ENCODE measurements at regions of chr14 and their contacts with region 1.

Region 1: DNA sequence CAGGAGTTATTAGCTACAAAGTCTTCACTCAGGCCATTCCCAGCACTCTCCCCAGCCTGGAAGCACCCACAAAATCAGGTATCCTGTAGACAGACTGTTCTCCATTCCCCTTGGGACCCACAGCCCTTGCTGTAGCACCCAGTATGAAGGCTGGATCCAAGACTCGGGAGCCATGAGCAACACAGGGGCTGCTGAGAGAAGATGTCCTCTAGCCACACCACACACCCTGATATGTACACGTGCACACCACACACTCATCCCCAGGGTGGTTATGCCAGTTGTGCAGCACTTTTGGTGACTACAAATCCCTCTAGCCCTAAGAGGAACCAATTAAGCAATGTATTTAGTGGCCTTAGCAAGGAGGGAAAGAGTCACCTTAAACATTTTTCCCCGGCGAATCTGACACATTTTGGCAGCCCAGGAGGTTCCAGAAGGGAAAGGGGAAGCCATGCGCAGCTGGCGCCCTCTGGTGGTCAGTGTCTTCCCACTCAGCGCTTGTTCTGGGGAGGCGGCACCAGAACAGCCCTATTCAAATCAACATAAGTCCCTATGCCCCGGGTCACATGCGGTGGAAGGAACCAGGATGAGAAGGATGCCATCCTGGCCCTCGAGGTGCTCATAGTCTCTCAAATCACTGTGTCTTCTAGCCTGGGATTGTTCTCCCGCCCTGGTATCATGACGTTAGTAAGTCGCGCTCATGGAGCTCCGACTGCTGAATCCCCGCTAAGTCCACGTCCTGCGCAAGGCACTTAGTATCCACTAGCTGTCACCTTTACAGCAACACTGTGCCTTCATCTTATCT is 96.9 kb downstream of the GCH1 start:
- DNase-seq: peak; percentile 66 to 81
- H3K4me3 ChIP-seq: no peak overlapping the region; the same call in 1 of the 2 replicates
- H3K27ac ChIP-seq: no peak overlapping the region
- H3K4me1 ChIP-seq: 0 out of 2 replicates have a peak, but pooled peaks cover 4% of the 10 kb centered on the region
- H3K27me3 ChIP-seq: no peaks in the 10 kb centered on the region
- CTCF ChIP-seq: peak; percentile 91

Region 2: DNA sequence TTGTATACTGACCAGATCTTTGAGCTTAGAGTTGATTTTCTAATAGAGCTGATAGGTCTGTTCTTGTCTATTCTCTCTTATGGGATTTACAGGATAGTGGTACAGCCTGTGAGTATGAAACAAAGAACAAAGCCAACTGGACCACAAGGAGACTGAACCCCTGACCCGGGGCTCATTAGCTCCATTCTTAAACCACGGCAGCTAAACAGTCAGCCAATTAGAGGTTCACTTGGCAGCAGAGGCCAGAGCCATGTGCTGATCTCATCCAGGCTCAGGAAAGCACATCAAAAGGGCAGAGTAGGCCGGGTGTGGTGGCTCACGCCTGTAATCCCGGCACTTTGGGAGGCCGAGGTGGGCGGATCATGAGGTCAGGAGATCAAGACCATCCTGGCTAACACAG is 1955.2 kb before region 1 on chr14:
- CTCF ChIA-PET with region 1: no interaction called
- POLR2A ChIA-PET with region 1: interaction called, 16 read pairs
- intact Hi-C with region 1: no loop called
- DNase-seq: no peak
- H3K4me3 ChIP-seq: no peak overlapping the region
- H3K27ac ChIP-seq: no peak overlapping the region
- H3K4me1 ChIP-seq: no peaks in the 10 kb centered on the region
- H3K27me3 ChIP-seq: no peaks in the 10 kb centered on the region
- CTCF ChIP-seq: no peak

Region 3: DNA sequence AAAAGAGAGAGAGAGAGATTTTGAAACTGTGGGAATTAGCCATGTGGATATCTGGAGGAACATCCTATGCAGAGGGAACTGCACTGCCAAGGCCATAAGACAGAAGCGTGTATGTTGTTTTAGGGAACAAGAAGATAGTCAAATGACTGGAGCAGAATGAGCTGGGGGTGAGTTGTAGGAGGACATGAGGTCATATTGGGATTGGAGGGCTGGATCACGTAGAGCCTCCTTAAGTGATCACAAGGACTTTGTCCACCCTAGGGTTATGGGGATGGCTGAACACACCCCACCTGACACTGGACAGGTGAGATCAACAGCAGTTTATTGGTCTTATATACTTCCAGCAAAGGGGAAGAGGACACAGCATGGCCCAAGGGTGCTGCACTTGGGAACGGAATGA is 304.2 kb before region 1 on chr14:
- CTCF ChIA-PET with region 1: interaction called, 14 read pairs
- POLR2A ChIA-PET with region 1: no interaction called
- intact Hi-C with region 1: no loop called
- DNase-seq: no peak
- H3K4me3 ChIP-seq: no peak overlapping the region
- H3K27ac ChIP-seq: no peak overlapping the region
- H3K4me1 ChIP-seq: no peaks in the 10 kb centered on the region
- H3K27me3 ChIP-seq: no peaks in the 10 kb centered on the region
- CTCF ChIP-seq: no peak

Region 4: DNA sequence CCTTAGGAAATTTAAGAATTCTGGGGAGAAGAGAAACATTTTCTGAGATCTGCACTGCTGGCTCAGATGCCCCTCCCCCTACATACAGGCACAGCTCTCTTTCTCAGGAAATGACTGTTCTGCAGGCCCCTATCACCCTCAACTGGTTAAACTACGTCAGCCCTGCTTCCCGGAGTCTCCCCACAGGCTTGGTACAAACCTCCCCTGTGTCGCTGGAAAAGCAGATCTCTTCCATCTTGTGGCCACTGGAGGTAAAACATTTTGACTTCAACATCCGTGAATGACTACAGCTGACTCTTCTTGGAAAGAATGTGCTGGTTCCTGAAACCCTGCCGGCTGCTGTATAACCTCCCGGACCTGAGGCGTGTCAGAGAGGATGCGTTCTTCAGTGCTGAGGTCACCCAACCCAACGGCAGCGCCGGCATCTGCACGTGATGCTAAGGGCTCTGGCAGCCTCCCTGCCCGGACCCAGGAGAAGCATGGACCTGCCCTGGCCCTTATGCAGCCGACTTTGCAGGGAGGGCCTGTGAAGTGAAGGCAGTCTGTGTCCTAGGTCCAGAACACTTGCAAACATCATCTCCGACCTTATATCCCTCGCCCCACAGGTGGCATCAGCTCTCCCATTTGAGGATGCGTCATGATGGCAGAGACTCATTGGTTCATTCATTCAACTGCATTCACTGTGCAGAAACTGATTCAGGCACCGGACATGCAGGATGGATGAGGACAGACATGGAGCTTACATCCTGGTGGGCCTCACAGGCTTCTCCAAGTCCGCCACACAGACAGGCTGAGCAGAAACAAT is 32.3 kb before region 1 on chr14:
- CTCF ChIA-PET with region 1: no interaction called
- POLR2A ChIA-PET with region 1: no interaction called
- intact Hi-C with region 1: loop called (anchors 1 kb)
- DNase-seq: peak; percentile 89 to 97
- H3K4me3 ChIP-seq: peak overlapping the region; percentile 40; the same call in 1 of the 2 replicates
- H3K27ac ChIP-seq: peak overlapping the region; percentile 89
- H3K4me1 ChIP-seq: peaks cover 24% of the 10 kb centered on the region
- H3K27me3 ChIP-seq: no peaks in the 10 kb centered on the region
- CTCF ChIP-seq: peak; percentile 77

Region 5: DNA sequence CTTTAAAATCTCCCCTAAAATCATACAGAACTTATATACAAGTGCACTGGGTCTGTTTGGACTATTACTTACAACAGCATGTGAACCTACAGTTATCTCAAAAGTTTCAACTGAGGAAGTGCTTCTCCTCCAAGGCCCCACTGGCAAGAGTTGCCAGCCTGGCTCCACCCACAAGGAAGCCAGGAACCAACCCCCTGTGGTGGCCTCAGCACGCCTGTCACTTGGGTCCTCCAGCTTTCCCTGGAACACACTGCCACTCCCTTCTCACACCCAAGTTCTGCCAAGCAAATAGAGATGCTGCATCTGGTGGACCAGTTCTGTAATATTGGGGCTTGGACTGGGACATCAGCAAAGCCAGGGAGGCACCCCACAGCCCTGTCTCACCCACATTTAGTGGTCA is 18.5 kb before region 1 on chr14:
- CTCF ChIA-PET with region 1: no interaction called
- POLR2A ChIA-PET with region 1: no interaction called
- intact Hi-C with region 1: no loop called
- DNase-seq: no peak
- H3K4me3 ChIP-seq: no peak overlapping the region
- H3K27ac ChIP-seq: no peak overlapping the region
- H3K4me1 ChIP-seq: no peaks in the 10 kb centered on the region
- H3K27me3 ChIP-seq: no peaks in the 10 kb centered on the region
- CTCF ChIP-seq: no peak

Region 6: GRCh38 chr14:54902521-54903420 is 97.0 kb after region 1 on chr14 and contains the start of gene GCH1:
- CTCF ChIA-PET with region 1: no interaction called
- POLR2A ChIA-PET with region 1: no interaction called
- intact Hi-C with region 1: loop called (anchors 5 kb)
- DNase-seq: peak; percentile 64 to 82
- H3K4me3 ChIP-seq: peak within 1 kb of the TSS; percentile 81
- H3K27ac ChIP-seq: peak within 1 kb of the TSS; percentile 25
- H3K4me1 ChIP-seq: peaks cover 9% of the 10 kb centered on the region
- H3K27me3 ChIP-seq: no peaks in the 10 kb centered on the region
- CTCF ChIP-seq: peak; percentile 65
- total RNA-seq, gene GCH1: 4.1 and 5.1 TPM in 2 replicates

Region 7: DNA sequence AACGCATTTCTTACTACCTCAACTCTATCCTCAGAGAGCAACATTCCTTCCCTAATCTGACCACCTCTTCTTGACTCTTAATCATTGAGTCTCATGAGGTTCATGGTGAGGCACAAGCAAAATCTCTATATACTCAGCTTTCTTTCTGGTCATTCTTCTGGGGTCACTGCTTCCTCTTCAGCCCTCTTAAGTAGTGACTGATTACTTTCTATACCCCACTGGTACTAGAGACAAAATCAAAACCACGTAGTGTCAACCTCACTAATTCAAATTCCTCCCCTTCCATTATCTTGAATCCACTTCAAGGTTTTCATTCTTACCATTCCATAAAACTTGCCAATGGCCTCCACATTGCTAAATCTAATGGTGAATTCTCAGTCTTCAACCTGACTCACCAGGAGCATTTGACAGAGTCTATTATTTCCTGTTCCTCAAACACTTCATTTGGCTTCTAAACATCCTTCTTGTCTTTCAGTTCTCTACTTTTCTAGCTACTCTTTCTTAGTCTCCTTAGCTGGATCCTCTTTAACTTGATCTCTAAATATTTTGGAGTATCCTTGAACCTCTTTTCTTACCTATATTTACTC is 214.3 kb after region 1 on chr14:
- CTCF ChIA-PET with region 1: no interaction called
- POLR2A ChIA-PET with region 1: no interaction called
- intact Hi-C with region 1: no loop called
- DNase-seq: no peak
- H3K4me3 ChIP-seq: no peak overlapping the region
- H3K27ac ChIP-seq: no peak overlapping the region
- H3K4me1 ChIP-seq: no peaks in the 10 kb centered on the region
- H3K27me3 ChIP-seq: no peaks in the 10 kb centered on the region
- CTCF ChIP-seq: no peak